ENCODE measurements at regions of chr12 and their contacts with region 1.

Region 1: DNA sequence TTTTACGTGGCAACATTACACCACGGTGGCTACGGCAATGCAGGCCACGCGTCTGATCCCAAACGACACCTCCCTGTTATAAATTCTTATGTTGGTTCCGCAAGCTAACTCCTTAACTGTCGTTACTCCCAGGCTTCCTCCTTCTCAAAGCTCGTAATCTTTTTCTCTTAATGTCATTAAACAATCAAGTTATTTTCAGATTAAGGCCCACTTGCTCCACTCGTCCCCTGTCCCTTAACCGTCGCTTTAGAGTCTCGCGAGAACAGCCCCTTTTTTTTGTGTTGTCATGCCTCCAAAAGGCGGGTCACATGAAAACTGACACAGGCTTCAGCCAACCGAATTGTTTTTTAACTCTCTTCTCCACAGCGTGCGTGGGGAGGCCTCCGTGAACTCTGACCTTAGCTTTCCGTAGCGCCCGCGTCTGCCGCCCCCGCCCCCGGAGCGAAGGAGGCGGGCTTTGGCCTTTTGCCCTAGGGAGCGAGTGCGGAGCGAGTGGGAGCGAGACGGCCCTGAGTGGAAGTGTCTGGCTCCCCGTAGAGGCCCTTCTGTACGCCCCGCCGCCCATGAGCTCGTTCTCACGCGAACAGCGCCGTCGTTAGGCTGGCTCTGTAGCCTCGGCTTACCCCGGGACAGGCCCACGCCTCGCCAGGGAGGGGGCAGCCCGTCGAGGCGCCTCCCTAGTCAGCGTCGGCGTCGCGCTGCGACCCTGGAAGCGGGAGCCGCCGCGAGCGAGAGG is at the start of gene CAND1:
- DNase-seq: peak; percentile 89 to 99 (median 95)
- ATAC-seq: peak; percentile 78
- H3K4me3 ChIP-seq: peak within 1 kb of the TSS; percentile 88 to 92
- H3K4me3 Mint-ChIP-seq: peak within 1 kb of the TSS; percentile 88
- H3K27ac ChIP-seq: peak within 1 kb of the TSS; percentile 68 to 97
- H3K27ac Mint-ChIP-seq: peak within 1 kb of the TSS; percentile 99
- H3K4me1 ChIP-seq: peaks cover 33% of the 10 kb centered on the region
- H3K4me1 Mint-ChIP-seq: peaks cover 48% of the 10 kb centered on the region
- H3K27me3 ChIP-seq: no peaks in the 10 kb centered on the region
- H3K27me3 Mint-ChIP-seq: no peaks in the 10 kb centered on the region
- CTCF ChIP-seq: no peak
- total RNA-seq, gene CAND1: 116 to 130 TPM

Region 2: GRCh38 chr12:66169221-66170170 is 1099.6 kb before region 1 on chr12 and contains the start of gene TMBIM4:
- CTCF ChIA-PET with region 1: no interaction called
- POLR2A ChIA-PET with region 1: interaction called, 7 read pairs
- intact Hi-C with region 1: loop called (anchors 1 to 10 kb)
- DNase-seq: peak; percentile 62 to 93 (median 84)
- ATAC-seq: peak; percentile 79
- H3K4me3 ChIP-seq: peak within 1 kb of the TSS; percentile 93 to 96
- H3K4me3 Mint-ChIP-seq: peak within 1 kb of the TSS; percentile 95
- H3K27ac ChIP-seq: peak within 1 kb of the TSS; percentile 97
- H3K27ac Mint-ChIP-seq: peak within 1 kb of the TSS; percentile 99
- H3K4me1 ChIP-seq: peaks cover 17% of the 10 kb centered on the region
- H3K4me1 Mint-ChIP-seq: peaks cover 51% of the 10 kb centered on the region
- H3K27me3 ChIP-seq: no peaks in the 10 kb centered on the region
- H3K27me3 Mint-ChIP-seq: peaks cover 2% of the 10 kb centered on the region
- CTCF ChIP-seq: peak; percentile 34
- total RNA-seq, gene TMBIM4: 22.4 to 22.7 TPM

Region 3: GRCh38 chr12:67222302-67222701 is 46.8 kb before region 1 on chr12:
- CTCF ChIA-PET with region 1: no interaction called
- POLR2A ChIA-PET with region 1: no interaction called
- intact Hi-C with region 1: no loop called
- DNase-seq: no peak
- ATAC-seq: no peak
- H3K4me3 ChIP-seq: no peak overlapping the region
- H3K4me3 Mint-ChIP-seq: no peak overlapping the region
- H3K27ac ChIP-seq: no peak overlapping the region
- H3K27ac Mint-ChIP-seq: no peak overlapping the region
- H3K4me1 ChIP-seq: no peaks in the 10 kb centered on the region
- H3K4me1 Mint-ChIP-seq: no peaks in the 10 kb centered on the region
- H3K27me3 ChIP-seq: peaks cover 0 to 2% of the 10 kb centered on the region in 2 experiments
- H3K27me3 Mint-ChIP-seq: no peaks in the 10 kb centered on the region
- CTCF ChIP-seq: no peak

Region 4: GRCh38 chr12:67280572-67280971 is 11.5 kb after region 1 on chr12:
- CTCF ChIA-PET with region 1: interaction called, 3 read pairs
- POLR2A ChIA-PET with region 1: interaction called, 22 read pairs
- intact Hi-C with region 1: loop called in 1 of 2 experiments (anchors 2 kb)
- DNase-seq: no peak
- ATAC-seq: no peak
- H3K4me3 ChIP-seq: no peak overlapping the region
- H3K4me3 Mint-ChIP-seq: no peak overlapping the region
- H3K27ac ChIP-seq: no peak overlapping the region
- H3K27ac Mint-ChIP-seq: peak overlapping the region; percentile 49
- H3K4me1 ChIP-seq: peaks cover 42% of the 10 kb centered on the region
- H3K4me1 Mint-ChIP-seq: peaks cover 69% of the 10 kb centered on the region
- H3K27me3 ChIP-seq: no peaks in the 10 kb centered on the region
- H3K27me3 Mint-ChIP-seq: no peaks in the 10 kb centered on the region
- CTCF ChIP-seq: no peak

Region 5: DNA sequence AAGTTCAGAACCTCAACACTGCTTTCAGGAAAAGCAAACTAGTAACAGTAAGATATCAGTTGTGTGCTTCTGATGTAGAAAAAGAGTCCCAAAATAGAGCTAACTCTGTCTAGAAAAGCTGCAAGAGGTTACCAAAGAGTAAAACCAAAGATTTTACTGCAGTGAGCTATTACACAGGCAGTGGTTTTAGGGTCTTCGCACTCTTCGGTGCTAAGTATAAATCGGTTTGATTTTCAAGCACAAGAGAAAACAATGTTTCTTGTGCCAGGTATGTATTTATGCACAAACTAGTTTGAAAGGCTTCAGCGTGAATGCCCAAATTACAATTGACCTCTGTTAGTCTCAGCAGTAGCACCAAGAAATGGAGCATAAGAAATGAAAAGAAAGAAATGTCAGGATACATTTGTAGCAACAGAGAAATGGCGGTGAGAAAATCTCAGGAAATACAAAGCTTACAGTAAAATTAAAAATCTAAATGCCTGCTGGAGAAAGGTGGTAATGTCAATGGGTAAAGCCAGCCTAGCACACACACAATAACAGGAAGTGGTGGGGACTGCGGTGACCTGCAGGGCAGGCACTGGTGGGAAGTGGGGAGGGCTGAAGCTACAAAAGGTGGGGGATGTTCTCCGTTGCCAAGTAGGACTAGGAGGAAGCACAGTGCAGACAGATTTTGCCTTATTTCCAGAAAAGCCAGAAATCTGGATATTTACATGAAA is 361.5 kb after region 1 on chr12:
- CTCF ChIA-PET with region 1: no interaction called
- POLR2A ChIA-PET with region 1: interaction called, 7 read pairs
- intact Hi-C with region 1: loop called in 1 of 2 experiments (anchors 5 kb)
- DNase-seq: peak; percentile 72 to 97 (median 87)
- ATAC-seq: peak; percentile 98
- H3K4me3 ChIP-seq: peak overlapping the region; percentile 23 to 33
- H3K4me3 Mint-ChIP-seq: peak overlapping the region; percentile 75
- H3K27ac ChIP-seq: peak overlapping the region; percentile 67 to 70
- H3K27ac Mint-ChIP-seq: peak overlapping the region; percentile 95
- H3K4me1 ChIP-seq: peaks cover 93% of the 10 kb centered on the region
- H3K4me1 Mint-ChIP-seq: peaks cover 92% of the 10 kb centered on the region
- H3K27me3 ChIP-seq: no peaks in the 10 kb centered on the region
- H3K27me3 Mint-ChIP-seq: no peaks in the 10 kb centered on the region
- CTCF ChIP-seq: peak; percentile 64

Region 6: DNA sequence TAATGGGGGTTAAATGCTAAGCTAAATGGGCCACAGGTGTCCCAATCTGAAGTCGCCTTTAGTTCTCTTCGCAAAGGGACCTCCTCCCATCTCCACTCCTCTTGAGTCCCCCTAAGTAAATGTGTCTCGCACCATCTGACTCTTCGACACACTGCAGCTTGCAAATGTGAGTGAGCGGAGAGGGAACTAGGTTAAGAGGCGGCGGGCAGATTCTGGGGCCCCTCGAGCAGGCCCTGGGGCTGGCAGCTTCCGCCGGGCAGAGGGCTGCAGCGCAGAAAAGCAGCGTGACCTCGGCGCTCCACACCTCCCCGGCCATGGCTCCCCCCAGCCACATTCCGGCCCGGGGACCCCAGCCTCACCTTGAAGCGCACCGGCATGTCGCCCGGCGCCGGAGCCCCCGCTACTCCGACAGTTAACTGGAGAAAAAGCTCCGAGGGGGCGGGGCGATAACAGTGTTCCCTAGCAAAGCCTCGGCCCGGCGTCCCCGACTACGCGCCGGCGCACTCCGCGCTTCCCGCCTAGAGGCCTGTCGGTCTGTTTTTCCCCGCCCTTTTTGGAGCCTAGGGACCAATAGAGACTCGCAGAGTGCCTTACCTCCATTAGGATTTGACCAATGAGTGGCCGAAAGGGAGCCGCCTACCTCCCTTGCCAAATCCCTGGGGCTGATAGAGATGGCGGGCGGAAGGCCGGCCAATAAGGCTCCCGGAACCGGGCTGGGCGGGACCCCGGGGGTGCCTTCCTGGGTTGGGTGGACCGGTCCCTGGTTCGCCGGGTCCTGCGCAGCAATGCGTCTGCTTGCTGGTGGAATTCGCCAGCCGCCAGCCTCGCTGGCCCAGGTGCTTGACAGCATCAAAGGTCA is 1063.0 kb after region 1 on chr12 and contains the start of gene MDM1:
- CTCF ChIA-PET with region 1: no interaction called
- POLR2A ChIA-PET with region 1: no interaction called
- intact Hi-C with region 1: loop called (anchors 5 kb)
- DNase-seq: peak; percentile 88 to 99 (median 96)
- ATAC-seq: peak; percentile 95
- H3K4me3 ChIP-seq: peak within 1 kb of the TSS; percentile 56 to 71
- H3K4me3 Mint-ChIP-seq: peak within 1 kb of the TSS; percentile 88
- H3K27ac ChIP-seq: peak within 1 kb of the TSS; percentile 45 to 46
- H3K27ac Mint-ChIP-seq: peak within 1 kb of the TSS; percentile 89
- H3K4me1 ChIP-seq: peaks cover 24% of the 10 kb centered on the region
- H3K4me1 Mint-ChIP-seq: peaks cover 49% of the 10 kb centered on the region
- H3K27me3 ChIP-seq: no peaks in the 10 kb centered on the region
- H3K27me3 Mint-ChIP-seq: no peaks in the 10 kb centered on the region
- CTCF ChIP-seq: no peak
- total RNA-seq, gene MDM1: 10.6 to 12.0 TPM

Region 7: GRCh38 chr12:68807576-68808387 is 1538.7 kb after region 1 on chr12 and contains the start of gene MDM2:
- CTCF ChIA-PET with region 1: no interaction called
- POLR2A ChIA-PET with region 1: interaction called, 9 read pairs
- intact Hi-C with region 1: loop called (anchors 1 to 5 kb)
- DNase-seq: peak; percentile 94 to 99 (median 97)
- ATAC-seq: peak; percentile 91
- H3K4me3 ChIP-seq: peak within 1 kb of the TSS; percentile 97
- H3K4me3 Mint-ChIP-seq: peak within 1 kb of the TSS; percentile 95
- H3K27ac ChIP-seq: peak within 1 kb of the TSS; percentile 86 to 95
- H3K27ac Mint-ChIP-seq: peak within 1 kb of the TSS; percentile 97
- H3K4me1 ChIP-seq: peaks cover 24% of the 10 kb centered on the region
- H3K4me1 Mint-ChIP-seq: peaks cover 30% of the 10 kb centered on the region
- H3K27me3 ChIP-seq: no peaks in the 10 kb centered on the region
- H3K27me3 Mint-ChIP-seq: no peaks in the 10 kb centered on the region
- CTCF ChIP-seq: peak; percentile 66
- total RNA-seq, gene MDM2: 95.1 to 98.0 TPM

Measured in CD8-positive, alpha-beta T cell (primary cell).